Activated T-helper 2 cell treated with anti-CD3 and anti-CD28 coated beads, Interferon-gamma antibody, Interleukin-2, Interleukin-4, amounts not matched to agents 10 μg/mL and 5 μg/mL and 100 μg/mL, durations not matched to agents 14 hours and 24 hours and 36 hours (primary cell): ENCODE measurements at regions of chr19 and their contacts with region 1.

Region 1: DNA sequence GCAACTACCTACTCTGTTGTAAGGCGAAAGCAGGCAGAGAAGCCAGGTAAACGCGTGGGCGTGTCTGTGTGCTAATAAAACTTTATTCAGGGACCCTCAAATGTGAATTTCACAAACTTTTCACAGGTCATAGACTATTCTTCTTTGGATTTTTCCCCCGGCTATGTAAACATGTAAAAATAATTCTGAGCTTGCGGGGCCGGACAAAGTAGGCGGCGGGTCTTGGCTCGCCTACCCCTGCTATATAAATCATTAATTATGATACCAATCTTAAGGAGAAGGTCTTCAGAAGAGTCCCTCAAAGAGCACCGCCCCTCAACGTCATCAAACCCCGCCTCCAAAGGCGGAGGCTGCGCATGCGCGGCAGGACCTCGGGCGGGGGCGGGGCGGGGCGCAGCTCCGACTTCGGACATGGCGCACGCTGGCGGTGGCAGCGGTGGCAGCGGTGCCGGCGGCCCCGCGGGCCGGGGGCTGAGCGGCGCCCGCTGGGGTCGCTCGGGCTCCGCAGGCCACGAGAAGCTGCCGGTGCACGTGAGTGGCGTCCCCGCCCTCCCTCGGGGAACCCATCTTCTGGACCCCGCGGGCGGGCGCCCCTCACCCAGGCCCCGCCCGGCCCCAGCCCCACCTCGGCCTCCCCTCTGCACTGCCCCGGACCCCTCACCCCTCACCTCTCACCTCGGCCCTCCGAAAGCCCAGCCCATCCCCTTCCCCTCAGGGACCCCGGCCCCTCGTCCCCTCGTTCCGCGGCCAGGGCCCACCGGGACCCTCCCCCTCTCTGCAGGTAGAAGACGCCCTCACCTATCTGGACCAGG is at the start of gene SIN3B:
- DNase-seq: peak; percentile 84
- H3K4me3 Mint-ChIP-seq: peak within 1 kb of the TSS; percentile 85
- H3K27ac Mint-ChIP-seq: peak within 1 kb of the TSS; percentile 81
- H3K4me1 Mint-ChIP-seq: peaks cover 24% of the 10 kb centered on the region
- H3K27me3 Mint-ChIP-seq: peaks cover 25% of the 10 kb centered on the region
- total RNA-seq, gene SIN3B: 40.3 and 40.5 TPM in 2 replicates

Region 2: DNA sequence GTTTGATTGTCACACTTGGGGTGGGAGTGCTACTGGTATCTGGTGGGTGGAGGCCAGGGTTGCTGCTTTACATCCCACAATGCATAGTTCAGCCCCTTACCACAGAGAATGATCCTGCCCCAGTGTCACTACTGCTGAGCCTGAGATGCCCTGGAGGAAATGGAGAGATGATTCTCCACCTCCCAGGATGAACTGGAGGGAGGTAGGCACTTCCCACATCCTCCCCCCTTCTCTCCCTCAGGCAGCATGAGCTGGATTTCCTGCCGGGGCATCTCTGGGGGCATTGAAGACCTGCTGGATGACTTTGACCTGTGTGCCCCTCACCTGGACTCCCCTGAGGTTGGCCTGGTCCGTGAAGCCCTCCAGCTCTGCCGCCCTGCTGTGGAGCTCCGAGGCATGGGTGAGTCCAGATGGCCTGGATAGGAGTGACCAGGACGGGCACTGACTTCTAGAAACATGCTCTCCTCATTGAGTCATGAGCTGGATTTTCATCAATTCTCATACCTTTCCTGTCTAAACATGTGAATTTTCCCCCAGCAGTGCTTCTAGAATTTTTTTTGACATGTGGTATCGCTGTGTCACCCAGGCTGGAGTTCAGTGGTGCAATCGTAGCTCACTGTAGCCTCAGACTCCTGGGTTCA is 64.3 kb before region 1 on chr19:
- intact Hi-C with region 1: no loop called
- DNase-seq: no peak
- H3K4me3 Mint-ChIP-seq: no peak overlapping the region
- H3K27ac Mint-ChIP-seq: no peak overlapping the region
- H3K4me1 Mint-ChIP-seq: no peaks in the 10 kb centered on the region
- H3K27me3 Mint-ChIP-seq: peaks cover 3% of the 10 kb centered on the region

Region 3: GRCh38 chr19:16897154-16897855 is 68.1 kb after region 1 on chr19:
- intact Hi-C with region 1: loop called (anchors 5 kb)
- DNase-seq: peak; percentile 67
- H3K4me3 Mint-ChIP-seq: peak overlapping the region; percentile 64
- H3K27ac Mint-ChIP-seq: no peak overlapping the region
- H3K4me1 Mint-ChIP-seq: peaks cover 25% of the 10 kb centered on the region
- H3K27me3 Mint-ChIP-seq: peaks cover 25% of the 10 kb centered on the region